ENCODE measurements at regions of chr4 and their contacts with region 1.

Region 1: DNA sequence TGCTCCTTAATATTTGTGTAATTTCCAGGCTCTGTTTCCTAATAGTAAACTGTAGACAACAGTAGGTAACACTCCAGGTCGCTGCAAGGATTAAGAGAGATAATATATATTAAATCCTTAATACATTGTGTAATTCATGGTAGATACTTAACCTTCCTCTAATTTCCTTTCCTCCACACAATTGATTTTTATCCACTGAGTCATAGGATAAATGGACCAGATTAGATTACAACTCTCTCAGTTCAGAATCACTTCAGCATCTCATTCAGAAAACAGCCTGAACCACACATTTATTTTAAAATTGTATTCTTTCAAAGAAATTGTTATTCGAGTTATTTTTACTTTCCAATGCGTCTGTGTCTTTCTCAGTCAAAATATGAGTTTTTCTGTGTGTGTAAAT is 17.1 kb downstream of the GK2 start:
- DNase-seq: no peak
- H3K4me3 Mint-ChIP-seq: no peak overlapping the region
- H3K27ac Mint-ChIP-seq: no peak overlapping the region
- H3K4me1 Mint-ChIP-seq: no peaks in the 10 kb centered on the region
- H3K27me3 Mint-ChIP-seq: peaks cover 40% of the 10 kb centered on the region
- CTCF ChIP-seq: no peak

Region 2: GRCh38 chr4:79042079-79042674 is 348.7 kb before region 1 on chr4:
- CTCF ChIA-PET with region 1: no interaction called
- POLR2A ChIA-PET with region 1: no interaction called
- intact Hi-C with region 1: loop called (anchors 5 kb)
- DNase-seq: peak; percentile 59
- H3K4me3 Mint-ChIP-seq: no peak overlapping the region
- H3K27ac Mint-ChIP-seq: no peak overlapping the region
- H3K4me1 Mint-ChIP-seq: no peaks in the 10 kb centered on the region
- H3K27me3 Mint-ChIP-seq: no peaks in the 10 kb centered on the region
- CTCF ChIP-seq: peak; percentile 56

Region 3: DNA sequence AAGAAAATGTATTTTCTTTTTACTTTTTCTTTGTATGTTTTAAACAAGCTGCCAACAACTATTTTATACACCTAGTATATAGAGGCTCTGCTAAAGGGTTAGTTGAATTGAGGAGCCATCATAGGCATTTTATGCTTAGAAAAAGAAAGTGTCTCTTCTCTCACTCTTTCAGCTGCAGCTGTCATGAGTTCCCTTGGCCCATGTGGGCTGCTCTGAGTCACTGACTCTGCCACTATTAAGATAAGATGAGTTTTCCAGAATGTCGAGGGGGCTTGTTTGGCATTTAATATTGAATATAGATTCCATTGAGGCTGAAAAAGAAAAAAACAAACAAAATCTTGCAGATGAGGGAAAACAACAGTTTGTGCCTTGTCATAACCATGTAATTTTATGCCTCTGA is 325.6 kb before region 1 on chr4:
- CTCF ChIA-PET with region 1: no interaction called
- POLR2A ChIA-PET with region 1: no interaction called
- intact Hi-C with region 1: no loop called
- DNase-seq: no peak
- H3K4me3 Mint-ChIP-seq: no peak overlapping the region
- H3K27ac Mint-ChIP-seq: no peak overlapping the region
- H3K4me1 Mint-ChIP-seq: no peaks in the 10 kb centered on the region
- H3K27me3 Mint-ChIP-seq: peaks cover 68% of the 10 kb centered on the region
- CTCF ChIP-seq: no peak